Tibial artery (tissue), 4 donors: ENCODE measurements at regions of chr2 and their contacts with region 1.

Region 1: DNA sequence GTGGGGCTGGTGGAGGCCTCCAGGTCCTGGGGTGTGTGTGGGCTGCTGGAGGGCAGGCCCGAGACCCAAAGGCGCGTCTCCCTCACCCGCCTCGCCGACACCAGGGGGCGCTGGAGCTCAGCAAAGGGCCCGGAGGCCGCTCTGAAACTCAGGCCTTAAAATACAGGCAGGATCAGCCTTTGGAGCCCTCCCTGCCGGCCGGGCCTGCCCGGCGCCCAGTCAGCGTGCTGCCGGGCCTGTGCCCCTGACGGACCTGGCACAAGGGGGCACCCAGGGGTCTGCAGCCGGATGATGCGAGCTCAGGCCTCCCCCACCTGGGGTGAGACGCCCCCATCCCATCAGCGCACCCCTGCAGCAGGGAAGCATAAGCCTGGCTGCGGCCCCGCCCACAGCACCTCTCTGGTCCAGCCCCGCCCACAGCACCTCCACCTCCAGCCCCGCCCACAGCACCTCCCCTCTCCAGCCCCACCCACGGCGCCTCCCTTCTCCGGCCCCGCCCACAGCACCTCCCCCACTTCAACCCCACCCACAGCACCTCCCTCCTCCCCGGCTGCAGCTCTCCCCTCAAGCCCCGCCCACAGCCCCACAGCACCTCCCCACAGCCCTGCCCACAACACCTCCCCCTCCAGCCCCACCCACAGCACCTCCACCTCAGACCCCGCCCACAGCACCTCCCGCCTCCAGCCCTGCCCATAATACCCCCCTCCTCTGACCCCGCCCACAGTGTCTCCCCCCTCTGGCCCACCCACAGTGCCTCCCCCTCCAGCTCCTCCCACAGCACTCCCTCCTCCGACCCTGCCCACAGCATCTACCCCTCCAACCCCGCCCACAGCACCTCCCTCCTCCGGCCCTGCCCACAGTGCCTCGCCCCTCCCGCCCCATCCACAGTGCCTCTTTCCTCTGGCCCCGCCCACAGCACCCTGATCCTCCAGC is 92.8 kb upstream of the OTOS start:
- DNase-seq: peak; percentile 76 to 95
- H3K4me3 ChIP-seq: peak overlapping the region; percentile 33 to 51
- H3K27ac ChIP-seq: peak overlapping the region; percentile 65 to 72
- H3K4me1 ChIP-seq: peaks cover 0 to 54% (median 34%) of the 10 kb centered on the region in 4 donors
- H3K27me3 ChIP-seq: no peaks in the 10 kb centered on the region
- CTCF ChIP-seq: peak; percentile 90 to 98

Region 2: DNA sequence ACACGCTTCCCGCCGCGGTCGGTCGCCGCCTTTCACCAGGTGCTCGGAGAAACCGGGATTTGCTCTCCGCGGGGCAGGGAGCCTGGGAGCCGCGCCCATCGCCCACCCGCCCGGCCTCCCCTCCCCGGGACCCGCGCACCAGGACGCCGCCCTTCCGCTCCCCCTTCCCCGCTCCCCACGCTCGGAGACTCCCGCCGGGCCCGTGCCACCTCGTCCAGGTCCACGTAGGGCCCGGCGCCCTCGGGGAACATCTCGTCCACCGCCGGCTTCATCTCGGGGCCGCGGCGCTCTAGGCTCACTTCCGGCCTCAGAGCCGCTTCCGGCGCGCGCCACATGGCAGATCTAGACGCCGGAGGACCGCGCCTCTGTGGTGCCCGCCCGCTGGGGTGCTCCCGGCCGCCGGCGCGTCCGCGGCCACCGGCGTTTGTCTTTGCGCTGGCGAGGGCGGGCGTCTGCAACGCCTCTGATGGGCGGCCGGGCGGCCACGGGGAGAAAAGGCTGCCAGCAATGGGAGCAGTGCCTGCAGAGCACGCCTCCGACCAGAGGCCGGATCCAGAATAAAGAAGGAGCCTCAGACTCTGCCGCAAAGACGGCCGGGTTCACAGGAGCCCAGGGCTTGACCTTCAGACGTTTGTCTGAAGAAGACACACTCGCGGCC is 97.1 kb before region 1 on chr2 and contains the start of gene COPS9:
- intact Hi-C with region 1: no loop called
- DNase-seq: peak; percentile 86 to 88
- H3K4me3 ChIP-seq: peak within 1 kb of the TSS; percentile 67 to 87
- H3K27ac ChIP-seq: peak within 1 kb of the TSS; percentile 57 to 76
- H3K4me1 ChIP-seq: peaks cover 0 to 21% (median 12%) of the 10 kb centered on the region in 4 donors
- H3K27me3 ChIP-seq: no peaks in the 10 kb centered on the region
- CTCF ChIP-seq: no peak

Region 3: DNA sequence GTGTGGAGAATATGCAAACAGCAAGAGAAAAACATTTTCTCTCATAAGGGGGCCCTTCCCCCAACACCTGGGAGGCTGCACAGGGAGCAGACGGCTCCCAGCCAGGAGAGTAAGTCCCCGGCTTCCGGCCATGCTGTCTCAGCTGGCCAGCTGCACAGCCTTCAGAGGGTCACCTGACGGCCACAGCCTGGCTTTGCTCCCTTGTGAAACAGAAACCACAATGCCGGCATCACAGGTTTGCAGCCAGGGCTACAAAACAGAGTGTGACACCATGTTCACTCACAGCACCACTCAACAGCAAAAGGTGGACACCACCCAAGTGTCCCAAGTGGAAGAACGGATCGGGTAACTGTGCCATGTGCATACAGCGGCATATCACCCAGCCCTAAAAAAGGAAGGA is 115.3 kb after region 1 on chr2:
- intact Hi-C with region 1: loop called (anchors 5 kb)
- DNase-seq: peak in 1 of 2 donors; percentile 44
- H3K4me3 ChIP-seq: no peak overlapping the region
- H3K27ac ChIP-seq: no peak overlapping the region
- H3K4me1 ChIP-seq: no peaks in the 10 kb centered on the region
- H3K27me3 ChIP-seq: peaks cover 0 to 16% of the 10 kb centered on the region in 2 donors
- CTCF ChIP-seq: no peak